ENCODE measurements at regions of chr12 and their contacts with region 1.

Region 1: GRCh38 chr12:123232807-123233543 is at the starts of genes MPHOSPH9 and MTRFR:
- DNase-seq: peak; percentile 97 to 100 (median 100)
- H3K4me3 ChIP-seq: peak within 1 kb of the TSS; percentile 91
- H3K4me3 Mint-ChIP-seq: peak within 1 kb of the TSS; percentile 92 to 100 (median 99)
- H3K27ac ChIP-seq: peak within 1 kb of the TSS; percentile 91
- H3K27ac Mint-ChIP-seq: peak within 1 kb of the TSS; percentile 93 to 99 (median 98)
- H3K4me1 ChIP-seq: peaks cover 78% of the 10 kb centered on the region
- H3K4me1 Mint-ChIP-seq: peaks cover 62 to 90% (median 89%) of the 10 kb centered on the region in 3 donors
- H3K27me3 ChIP-seq: no peaks in the 10 kb centered on the region
- H3K27me3 Mint-ChIP-seq: peaks cover 0 to 2% of the 10 kb centered on the region in 2 donors
- total RNA-seq, gene MPHOSPH9: 67.3 to 74.8 TPM
- total RNA-seq, gene MTRFR: 26.6 TPM

Region 2: DNA sequence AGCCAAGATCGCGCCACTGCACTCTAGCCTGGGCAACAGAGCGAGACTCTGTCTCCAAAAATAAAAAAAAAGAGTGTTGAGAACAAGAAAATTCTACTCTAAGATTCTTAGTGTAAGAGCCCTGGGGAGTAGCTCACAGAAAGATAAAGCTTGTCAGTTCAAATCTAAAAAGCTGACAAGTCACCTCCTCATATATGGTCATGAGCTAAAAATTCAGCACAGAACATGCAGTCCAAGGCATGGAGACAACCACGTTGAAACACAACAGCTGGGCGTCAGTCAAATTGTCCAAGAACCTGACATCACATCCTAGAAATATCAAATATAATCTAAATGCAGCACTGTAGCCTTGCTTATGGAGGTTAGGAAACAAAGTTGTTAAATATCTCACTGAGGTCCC is 858.3 kb before region 1 on chr12:
- CTCF ChIA-PET with region 1: no interaction called
- POLR2A ChIA-PET with region 1: no interaction called
- DNase-seq: no peak
- H3K4me3 ChIP-seq: no peak overlapping the region
- H3K4me3 Mint-ChIP-seq: no peak overlapping the region
- H3K27ac ChIP-seq: no peak overlapping the region
- H3K27ac Mint-ChIP-seq: peak overlapping the region in 1 of 8 donors; percentile 27
- H3K4me1 ChIP-seq: no peaks in the 10 kb centered on the region
- H3K4me1 Mint-ChIP-seq: peaks cover 11 to 25% (median 21%) of the 10 kb centered on the region in 3 donors
- H3K27me3 ChIP-seq: no peaks in the 10 kb centered on the region
- H3K27me3 Mint-ChIP-seq: no peaks in the 10 kb centered on the region

Region 3: DNA sequence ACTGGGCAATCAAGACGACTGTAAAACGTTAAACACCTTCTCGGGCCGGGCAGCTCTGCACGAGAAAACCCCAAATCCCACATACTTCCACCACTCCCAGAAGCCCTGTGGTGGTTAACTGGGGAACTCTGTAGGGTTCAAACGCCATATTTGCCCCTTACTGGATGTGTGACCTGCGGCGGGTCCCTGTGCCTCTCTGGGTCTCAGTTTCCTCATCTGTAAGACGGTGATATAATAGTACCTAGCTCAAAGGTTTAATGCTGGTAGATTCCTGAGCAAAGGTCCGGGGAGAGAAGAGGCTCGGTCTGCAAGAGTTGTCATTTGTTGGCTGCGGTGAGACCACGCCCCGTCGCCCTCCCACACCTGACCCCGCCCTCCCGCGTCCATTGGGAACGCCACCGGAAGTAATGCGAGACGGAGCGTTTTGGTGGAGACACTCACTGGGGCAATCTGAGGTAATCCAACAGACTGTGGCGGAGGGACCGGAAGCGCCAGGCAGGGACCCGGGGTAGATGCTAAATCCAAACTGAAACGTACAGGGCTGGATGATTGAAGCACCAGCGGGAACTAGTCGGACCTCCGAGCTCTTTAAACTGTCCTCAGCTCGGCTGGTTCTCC is 258.6 kb before region 1 on chr12:
- CTCF ChIA-PET with region 1: interaction called, 5 read pairs
- POLR2A ChIA-PET with region 1: interaction called, 20 read pairs
- DNase-seq: peak; percentile 97 to 99 (median 98)
- H3K4me3 ChIP-seq: peak overlapping the region; percentile 100
- H3K4me3 Mint-ChIP-seq: peak overlapping the region; percentile 95 to 99 (median 98)
- H3K27ac ChIP-seq: peak overlapping the region; percentile 98
- H3K27ac Mint-ChIP-seq: peak overlapping the region; percentile 99 to 100 (median 99)
- H3K4me1 ChIP-seq: peaks cover 27% of the 10 kb centered on the region
- H3K4me1 Mint-ChIP-seq: peaks cover 26 to 50% (median 29%) of the 10 kb centered on the region in 3 donors
- H3K27me3 ChIP-seq: no peaks in the 10 kb centered on the region
- H3K27me3 Mint-ChIP-seq: no peaks in the 10 kb centered on the region

Region 4: GRCh38 chr12:123075646-123076171 is 157.3 kb before region 1 on chr12:
- CTCF ChIA-PET with region 1: interaction called, 10 read pairs
- POLR2A ChIA-PET with region 1: interaction called, 4 read pairs
- DNase-seq: peak; percentile 51 to 86 (median 77)
- H3K4me3 ChIP-seq: peak overlapping the region; percentile 46
- H3K4me3 Mint-ChIP-seq: peak overlapping the region; percentile 77 to 94 (median 87)
- H3K27ac ChIP-seq: peak overlapping the region; percentile 29
- H3K27ac Mint-ChIP-seq: peak overlapping the region; percentile 86 to 99 (median 97)
- H3K4me1 ChIP-seq: peaks cover 62% of the 10 kb centered on the region
- H3K4me1 Mint-ChIP-seq: peaks cover 42 to 57% (median 43%) of the 10 kb centered on the region in 3 donors
- H3K27me3 ChIP-seq: no peaks in the 10 kb centered on the region
- H3K27me3 Mint-ChIP-seq: no peaks in the 10 kb centered on the region

Region 5: GRCh38 chr12:123200414-123200813 is 32.6 kb before region 1 on chr12:
- CTCF ChIA-PET with region 1: interaction called, 14 read pairs
- POLR2A ChIA-PET with region 1: interaction called, 3 read pairs
- DNase-seq: peak in 1 of 5 donors; percentile 30
- H3K4me3 ChIP-seq: no peak overlapping the region
- H3K4me3 Mint-ChIP-seq: no peak overlapping the region
- H3K27ac ChIP-seq: no peak overlapping the region
- H3K27ac Mint-ChIP-seq: peak overlapping the region in 7 of 8 donors; percentile 9 to 87 (median 77)
- H3K4me1 ChIP-seq: peaks cover 13% of the 10 kb centered on the region
- H3K4me1 Mint-ChIP-seq: peaks cover 8 to 14% (median 10%) of the 10 kb centered on the region in 3 donors
- H3K27me3 ChIP-seq: no peaks in the 10 kb centered on the region
- H3K27me3 Mint-ChIP-seq: no peaks in the 10 kb centered on the region

Region 6: GRCh38 chr12:123365025-123365917 is 132.3 kb after region 1 on chr12:
- CTCF ChIA-PET with region 1: interaction called, 8 read pairs
- POLR2A ChIA-PET with region 1: interaction called, 17 read pairs
- DNase-seq: peak; percentile 96 to 99 (median 99)
- H3K4me3 ChIP-seq: peak overlapping the region; percentile 97
- H3K4me3 Mint-ChIP-seq: peak overlapping the region; percentile 88 to 94 (median 93)
- H3K27ac ChIP-seq: peak overlapping the region; percentile 97
- H3K27ac Mint-ChIP-seq: peak overlapping the region; percentile 87 to 97 (median 95)
- H3K4me1 ChIP-seq: peaks cover 20% of the 10 kb centered on the region
- H3K4me1 Mint-ChIP-seq: peaks cover 14 to 31% (median 20%) of the 10 kb centered on the region in 3 donors
- H3K27me3 ChIP-seq: no peaks in the 10 kb centered on the region
- H3K27me3 Mint-ChIP-seq: no peaks in the 10 kb centered on the region

Measured in CD8-positive, alpha-beta memory T cell (primary cell).